ENCODE measurements at regions of chr11 and their contacts with region 1.

Region 1: GRCh38 chr11:96254087-96254486 is 88.9 kb downstream of the MAML2 start:
- DNase-seq: peak in 4 of 9 experiments; percentile 20 to 73 (median 44)
- ATAC-seq: no peak
- H3K4me3 ChIP-seq: peak overlapping the region; percentile 0 to 1
- H3K4me3 Mint-ChIP-seq: peak overlapping the region; percentile 64
- H3K27ac ChIP-seq: peak overlapping the region; percentile 12 to 38
- H3K27ac Mint-ChIP-seq: peak overlapping the region; percentile 85
- H3K4me1 ChIP-seq: peaks cover 82% of the 10 kb centered on the region
- H3K4me1 Mint-ChIP-seq: peaks cover 90% of the 10 kb centered on the region
- H3K27me3 ChIP-seq: no peaks in the 10 kb centered on the region
- H3K27me3 Mint-ChIP-seq: no peaks in the 10 kb centered on the region
- CTCF ChIP-seq: no peak

Region 2: DNA sequence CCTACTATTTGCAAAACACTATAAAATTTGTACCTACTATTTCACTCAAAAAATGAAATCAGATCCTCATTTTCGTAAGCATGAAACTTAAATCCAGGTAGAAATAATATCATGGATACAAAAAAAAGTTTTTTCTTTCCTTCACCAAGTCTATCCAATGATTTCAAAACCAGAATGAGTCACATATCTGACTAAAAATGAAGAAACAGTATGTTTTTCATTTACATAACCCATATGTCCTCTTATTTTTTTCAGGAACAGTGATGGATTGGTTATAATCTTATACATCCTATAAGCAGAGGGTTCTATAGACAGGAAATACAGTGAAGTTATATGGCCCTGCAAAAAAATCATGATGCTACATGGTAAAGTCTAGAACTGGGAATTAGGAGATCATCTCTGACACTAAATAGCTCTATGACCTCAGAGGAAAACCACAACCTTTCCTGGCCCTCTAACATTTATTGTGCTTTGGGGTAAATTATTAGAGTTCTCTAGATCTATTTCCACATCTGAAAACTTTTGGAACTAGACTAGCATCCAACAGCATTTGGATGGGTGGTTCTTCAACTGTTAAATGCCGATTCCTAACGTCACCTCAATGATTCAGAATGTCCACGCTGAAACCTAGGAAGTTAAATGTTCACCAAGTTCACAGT is 341.1 kb before region 1 on chr11:
- CTCF ChIA-PET with region 1: no interaction called
- POLR2A ChIA-PET with region 1: no interaction called
- intact Hi-C with region 1: no loop called
- DNase-seq: no peak
- ATAC-seq: no peak
- H3K4me3 ChIP-seq: no peak overlapping the region
- H3K4me3 Mint-ChIP-seq: no peak overlapping the region
- H3K27ac ChIP-seq: no peak overlapping the region
- H3K27ac Mint-ChIP-seq: no peak overlapping the region
- H3K4me1 ChIP-seq: no peaks in the 10 kb centered on the region
- H3K4me1 Mint-ChIP-seq: peaks cover 41% of the 10 kb centered on the region
- H3K27me3 ChIP-seq: no peaks in the 10 kb centered on the region
- H3K27me3 Mint-ChIP-seq: no peaks in the 10 kb centered on the region
- CTCF ChIP-seq: no peak

Region 3: GRCh38 chr11:95985174-95985808 is 268.8 kb before region 1 on chr11:
- CTCF ChIA-PET with region 1: no interaction called
- POLR2A ChIA-PET with region 1: no interaction called
- intact Hi-C with region 1: no loop called
- DNase-seq: no peak
- ATAC-seq: no peak
- H3K4me3 ChIP-seq: no peak overlapping the region
- H3K4me3 Mint-ChIP-seq: no peak overlapping the region
- H3K27ac ChIP-seq: no peak overlapping the region
- H3K27ac Mint-ChIP-seq: no peak overlapping the region
- H3K4me1 ChIP-seq: no peaks in the 10 kb centered on the region
- H3K4me1 Mint-ChIP-seq: peaks cover 4% of the 10 kb centered on the region
- H3K27me3 ChIP-seq: no peaks in the 10 kb centered on the region
- H3K27me3 Mint-ChIP-seq: no peaks in the 10 kb centered on the region
- CTCF ChIP-seq: no peak

Region 4: GRCh38 chr11:96215110-96215782 is 38.8 kb before region 1 on chr11:
- CTCF ChIA-PET with region 1: interaction called, 4 read pairs
- POLR2A ChIA-PET with region 1: interaction called, 3 read pairs
- intact Hi-C with region 1: loop called in 1 of 2 experiments (anchors 2 kb)
- DNase-seq: peak in 7 of 9 experiments; percentile 15 to 76 (median 46)
- ATAC-seq: peak; percentile 63
- H3K4me3 ChIP-seq: peak overlapping the region in 1 of 2 experiments; percentile 31
- H3K4me3 Mint-ChIP-seq: peak overlapping the region; percentile 67
- H3K27ac ChIP-seq: peak overlapping the region; percentile 58 to 89
- H3K27ac Mint-ChIP-seq: peak overlapping the region; percentile 95
- H3K4me1 ChIP-seq: peaks cover 99% of the 10 kb centered on the region
- H3K4me1 Mint-ChIP-seq: peaks cover 82% of the 10 kb centered on the region
- H3K27me3 ChIP-seq: no peaks in the 10 kb centered on the region
- H3K27me3 Mint-ChIP-seq: no peaks in the 10 kb centered on the region
- CTCF ChIP-seq: no peak

Region 5: DNA sequence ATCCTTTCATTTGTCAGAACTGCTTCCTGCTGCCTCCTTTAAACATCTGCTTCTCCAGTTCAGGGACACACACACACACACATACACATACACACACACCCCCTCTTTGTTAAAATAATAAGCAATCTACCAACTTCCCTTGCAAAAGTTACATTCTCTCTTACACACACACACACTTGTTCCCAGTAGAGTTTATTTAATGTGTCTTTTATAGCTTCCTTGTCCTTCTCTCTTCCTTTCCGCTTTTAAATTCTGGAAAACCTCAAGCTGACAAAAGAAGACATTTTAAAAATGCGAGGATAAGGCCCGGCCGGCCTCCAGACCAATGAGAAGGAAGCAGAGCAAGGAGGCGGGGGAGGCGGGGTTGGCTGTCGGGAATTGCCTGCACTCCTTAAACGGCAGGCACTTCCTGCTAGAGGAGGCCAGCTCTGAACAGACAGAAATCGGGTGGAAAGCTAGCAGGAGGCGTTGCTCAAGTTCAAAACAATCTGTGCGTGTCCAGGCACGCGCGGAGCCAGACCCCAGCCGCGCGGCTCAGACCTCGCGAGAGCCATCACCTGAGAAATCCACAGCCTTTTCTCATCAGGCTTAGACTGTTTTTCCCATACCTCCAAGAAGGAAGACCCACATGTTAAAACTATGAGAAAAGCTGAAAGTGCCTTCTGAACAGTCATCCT is 11.0 kb before region 1 on chr11:
- CTCF ChIA-PET with region 1: interaction called, 8 read pairs
- POLR2A ChIA-PET with region 1: interaction called, 5 read pairs
- intact Hi-C with region 1: loop called in 1 of 2 experiments (anchors 1 kb)
- DNase-seq: peak; percentile 40 to 87 (median 71)
- ATAC-seq: peak; percentile 87
- H3K4me3 ChIP-seq: peak overlapping the region; percentile 55 to 61
- H3K4me3 Mint-ChIP-seq: peak overlapping the region; percentile 87
- H3K27ac ChIP-seq: peak overlapping the region; percentile 46 to 68
- H3K27ac Mint-ChIP-seq: peak overlapping the region; percentile 86
- H3K4me1 ChIP-seq: peaks cover 54% of the 10 kb centered on the region
- H3K4me1 Mint-ChIP-seq: peaks cover 62% of the 10 kb centered on the region
- H3K27me3 ChIP-seq: no peaks in the 10 kb centered on the region
- H3K27me3 Mint-ChIP-seq: no peaks in the 10 kb centered on the region
- CTCF ChIP-seq: no peak

Region 6: DNA sequence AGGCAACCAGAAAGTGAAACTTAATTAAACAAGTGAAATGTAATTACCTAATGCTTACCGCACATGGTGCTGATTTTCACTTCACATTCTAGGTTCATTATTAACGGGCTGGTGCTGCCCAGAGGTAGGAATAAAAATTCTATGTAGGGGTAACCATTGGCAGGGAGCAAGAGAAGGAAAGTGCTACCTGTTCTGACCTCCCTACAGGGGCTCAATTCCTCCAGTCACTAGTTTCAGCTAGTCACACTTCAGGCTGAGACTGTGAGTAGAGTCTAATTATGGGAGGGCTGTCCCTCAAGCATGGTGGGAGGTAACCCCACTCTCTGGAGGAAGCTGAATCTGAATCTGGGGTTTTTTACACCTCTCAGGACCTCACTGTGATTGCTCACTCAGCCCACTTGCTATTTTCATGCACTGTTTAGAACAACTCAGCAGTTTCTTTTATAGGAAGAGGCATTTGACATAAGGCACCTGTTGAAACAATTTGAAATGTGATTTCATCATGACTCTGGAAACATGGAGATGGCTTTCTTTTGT is 13.5 kb after region 1 on chr11:
- CTCF ChIA-PET with region 1: no interaction called
- POLR2A ChIA-PET with region 1: interaction called, 7 read pairs
- intact Hi-C with region 1: loop called in 1 of 2 experiments (anchors 1 kb)
- DNase-seq: peak in 6 of 9 experiments; percentile 20 to 74 (median 36)
- ATAC-seq: peak; percentile 93
- H3K4me3 ChIP-seq: peak overlapping the region; percentile 7 to 10
- H3K4me3 Mint-ChIP-seq: peak overlapping the region; percentile 79
- H3K27ac ChIP-seq: peak overlapping the region; percentile 32 to 75
- H3K27ac Mint-ChIP-seq: peak overlapping the region; percentile 91
- H3K4me1 ChIP-seq: peaks cover 55% of the 10 kb centered on the region
- H3K4me1 Mint-ChIP-seq: peaks cover 86% of the 10 kb centered on the region
- H3K27me3 ChIP-seq: no peaks in the 10 kb centered on the region
- H3K27me3 Mint-ChIP-seq: no peaks in the 10 kb centered on the region
- CTCF ChIP-seq: no peak

Region 7: DNA sequence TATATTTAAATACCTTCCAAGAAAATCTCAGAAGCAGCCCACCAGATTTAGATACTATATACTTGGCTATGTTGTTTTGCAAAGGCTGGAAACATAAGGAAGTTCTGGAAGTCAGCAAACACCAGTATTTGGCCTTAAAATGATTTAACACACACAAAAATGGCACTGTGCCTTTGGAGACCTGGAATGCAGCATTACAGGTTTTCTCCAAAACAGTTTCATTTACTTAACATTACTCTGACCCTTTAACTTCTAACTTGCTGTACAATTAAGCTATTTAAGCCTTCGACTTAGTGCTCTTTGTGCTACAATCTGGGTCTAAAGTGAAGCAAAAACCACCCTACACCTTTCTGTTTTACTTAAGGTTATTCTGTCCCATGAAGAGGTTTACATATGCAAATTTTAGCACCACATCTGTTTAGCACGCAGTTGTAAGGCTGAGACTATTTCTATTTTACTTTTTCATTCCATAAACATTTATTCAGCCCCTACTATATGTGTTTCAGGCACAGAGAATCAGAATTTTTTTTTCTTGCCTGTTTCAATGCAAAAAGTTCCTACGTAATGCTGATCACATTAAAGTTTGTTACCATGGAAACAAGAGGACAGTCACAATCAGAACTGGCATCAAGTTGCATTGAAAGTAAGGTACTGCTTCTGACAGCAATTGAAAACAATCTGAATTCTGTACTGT is 18.6 kb after region 1 on chr11:
- CTCF ChIA-PET with region 1: no interaction called
- POLR2A ChIA-PET with region 1: interaction called, 7 read pairs
- intact Hi-C with region 1: loop called in 1 of 2 experiments (anchors 1 kb)
- DNase-seq: peak in 2 of 9 experiments; percentile 53 to 75
- ATAC-seq: peak; percentile 82
- H3K4me3 ChIP-seq: no peak overlapping the region
- H3K4me3 Mint-ChIP-seq: no peak overlapping the region
- H3K27ac ChIP-seq: peak overlapping the region; percentile 24 to 33
- H3K27ac Mint-ChIP-seq: peak overlapping the region; percentile 87
- H3K4me1 ChIP-seq: peaks cover 14% of the 10 kb centered on the region
- H3K4me1 Mint-ChIP-seq: peaks cover 60% of the 10 kb centered on the region
- H3K27me3 ChIP-seq: no peaks in the 10 kb centered on the region
- H3K27me3 Mint-ChIP-seq: no peaks in the 10 kb centered on the region
- CTCF ChIP-seq: no peak

Region 8: DNA sequence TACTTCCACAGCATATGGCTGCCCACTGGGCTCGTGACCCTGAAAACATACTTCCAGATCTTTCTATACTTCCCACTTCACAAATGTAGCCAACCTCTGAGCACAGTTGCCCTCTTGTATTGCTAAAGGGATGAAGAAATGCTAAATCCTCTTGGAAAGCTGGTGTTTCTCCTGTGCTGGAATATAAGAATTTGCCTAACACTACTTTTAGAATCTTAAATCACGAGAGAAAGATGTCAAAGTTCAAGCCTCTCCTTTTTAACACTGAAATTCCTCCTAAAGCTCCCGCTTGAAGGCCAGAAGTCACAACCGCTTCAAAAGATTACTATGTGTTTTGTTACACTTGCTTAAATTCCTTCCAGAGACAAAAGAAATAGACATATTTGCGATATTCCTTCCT is 67.0 kb after region 1 on chr11:
- CTCF ChIA-PET with region 1: no interaction called
- POLR2A ChIA-PET with region 1: no interaction called
- intact Hi-C with region 1: no loop called
- DNase-seq: no peak
- ATAC-seq: no peak
- H3K4me3 ChIP-seq: no peak overlapping the region
- H3K4me3 Mint-ChIP-seq: no peak overlapping the region
- H3K27ac ChIP-seq: no peak overlapping the region
- H3K27ac Mint-ChIP-seq: no peak overlapping the region
- H3K4me1 ChIP-seq: peaks cover 58% of the 10 kb centered on the region
- H3K4me1 Mint-ChIP-seq: peaks cover 92% of the 10 kb centered on the region
- H3K27me3 ChIP-seq: no peaks in the 10 kb centered on the region
- H3K27me3 Mint-ChIP-seq: no peaks in the 10 kb centered on the region
- CTCF ChIP-seq: no peak

Measured in CD8-positive, alpha-beta T cell (primary cell).